Sigmoid colon (tissue), 7 donors: ENCODE measurements at regions of chr1 and their contacts with region 1.

Region 1: GRCh38 chr1:62746085-62746808 is 37.7 kb upstream of the ATG4C start:
- DNase-seq: no peak
- H3K4me3 ChIP-seq: no peak overlapping the region
- H3K27ac ChIP-seq: no peak overlapping the region
- H3K4me1 ChIP-seq: peaks cover 0 to 23% (median 14%) of the 10 kb centered on the region in 4 donors
- H3K27me3 ChIP-seq: no peaks in the 10 kb centered on the region
- CTCF ChIP-seq: peak in 3 of 4 experiments; percentile 10 to 63 (median 48)
- EP300 ChIP-seq: no peak
- POLR2A ChIP-seq: no peak

Region 2: GRCh38 chr1:62508187-62508758 is 238.0 kb before region 1 on chr1:
- intact Hi-C with region 1: loop called (anchors 2 kb)
- DNase-seq: no peak
- H3K4me3 ChIP-seq: no peak overlapping the region
- H3K27ac ChIP-seq: no peak overlapping the region
- H3K4me1 ChIP-seq: no peaks in the 10 kb centered on the region
- H3K27me3 ChIP-seq: no peaks in the 10 kb centered on the region
- CTCF ChIP-seq: peak in 1 of 4 experiments; percentile 45
- EP300 ChIP-seq: no peak
- POLR2A ChIP-seq: no peak

Region 3: DNA sequence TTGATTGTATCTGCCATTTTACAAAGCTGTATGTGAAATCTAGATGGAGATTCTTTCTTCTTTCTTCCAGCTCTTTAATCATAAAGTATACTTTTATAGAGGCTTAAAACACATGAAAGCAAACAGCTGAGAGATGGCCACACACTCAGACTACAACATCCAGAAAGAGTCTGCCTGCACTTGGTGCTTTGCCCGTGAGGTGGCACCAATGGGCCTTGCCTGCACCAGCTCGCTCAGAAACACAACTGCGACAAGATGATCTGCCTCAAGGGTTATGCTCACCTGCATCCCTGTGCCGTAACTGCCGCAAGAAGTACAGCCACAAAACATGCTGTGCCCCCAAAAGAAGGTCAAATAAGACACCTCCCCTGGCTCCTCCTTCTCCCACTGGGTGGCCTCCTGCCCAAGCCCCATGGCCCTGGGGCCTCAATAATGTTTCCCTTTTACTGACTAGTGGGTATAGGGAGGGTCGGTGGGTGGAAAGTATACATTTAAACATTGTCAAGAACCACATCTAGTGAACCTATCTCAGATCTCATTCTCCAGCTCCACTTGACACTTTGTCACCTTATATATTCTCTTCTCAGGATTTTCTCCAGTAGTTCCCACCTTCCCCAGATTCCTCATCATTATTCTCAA is 215.6 kb before region 1 on chr1:
- intact Hi-C with region 1: loop called (anchors 2 kb)
- DNase-seq: no peak
- H3K4me3 ChIP-seq: no peak overlapping the region
- H3K27ac ChIP-seq: no peak overlapping the region
- H3K4me1 ChIP-seq: no peaks in the 10 kb centered on the region
- H3K27me3 ChIP-seq: no peaks in the 10 kb centered on the region
- CTCF ChIP-seq: peak; percentile 15 to 55 (median 39)
- EP300 ChIP-seq: no peak
- POLR2A ChIP-seq: no peak

Region 4: GRCh38 chr1:62687903-62688686 is 58.2 kb before region 1 on chr1 and contains the start of gene DOCK7:
- intact Hi-C with region 1: loop called (anchors 5 kb)
- DNase-seq: peak; percentile 86
- H3K4me3 ChIP-seq: peak within 1 kb of the TSS; percentile 81 to 92 (median 88)
- H3K27ac ChIP-seq: peak within 1 kb of the TSS; percentile 81 to 88 (median 84)
- H3K4me1 ChIP-seq: peaks cover 0 to 61% (median 49%) of the 10 kb centered on the region in 4 donors
- H3K27me3 ChIP-seq: no peaks in the 10 kb centered on the region
- CTCF ChIP-seq: no peak
- EP300 ChIP-seq: no peak
- POLR2A ChIP-seq: no peak
- total RNA-seq, gene DOCK7: 32.4 to 54.8 (median 42.9) TPM